ENCODE measurements at regions of chr6 and their contacts with region 1.

Region 1: DNA sequence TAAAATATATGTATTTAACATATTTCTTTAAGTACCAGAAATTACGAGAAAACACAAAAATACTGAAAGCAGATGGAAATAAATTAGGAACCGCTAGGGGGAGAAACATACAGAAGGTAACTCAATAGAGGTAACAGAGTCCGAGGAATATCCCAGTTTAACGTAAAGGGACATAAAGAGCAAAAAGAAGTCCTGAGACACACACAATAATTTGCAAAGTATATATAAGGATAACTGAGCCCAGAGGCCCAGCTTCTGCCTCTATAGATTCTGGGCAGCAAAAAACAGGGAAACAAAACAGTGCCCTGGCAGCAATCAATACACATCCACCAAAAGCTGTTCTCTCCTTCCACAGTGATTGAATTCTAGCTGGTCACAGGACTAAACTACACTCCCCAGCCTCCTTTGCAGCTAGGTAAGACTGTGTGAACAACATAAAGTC is 15.1 kb downstream of the TBC1D32 start:
- DNase-seq: no peak
- ATAC-seq: no peak
- H3K4me3 ChIP-seq: no peak overlapping the region
- H3K4me1 ChIP-seq: peaks cover 6% of the 10 kb centered on the region
- CTCF ChIP-seq: peak; percentile 14

Region 2: GRCh38 chr6:121393731-121394505 is 74.8 kb after region 1 on chr6:
- intact Hi-C with region 1: loop called in 1 of 2 experiments (anchors 10 kb)
- DNase-seq: no peak
- ATAC-seq: no peak
- H3K4me3 ChIP-seq: no peak overlapping the region
- H3K4me1 ChIP-seq: no peaks in the 10 kb centered on the region
- CTCF ChIP-seq: no peak

Measured in mucosa of descending colon (tissue), 3 donors.